Activated B cell treated with CpG ODN at 0.5 μM for 24 hours (primary cell): ENCODE measurements at regions of chr6 and their contacts with region 1.

Region 1: DNA sequence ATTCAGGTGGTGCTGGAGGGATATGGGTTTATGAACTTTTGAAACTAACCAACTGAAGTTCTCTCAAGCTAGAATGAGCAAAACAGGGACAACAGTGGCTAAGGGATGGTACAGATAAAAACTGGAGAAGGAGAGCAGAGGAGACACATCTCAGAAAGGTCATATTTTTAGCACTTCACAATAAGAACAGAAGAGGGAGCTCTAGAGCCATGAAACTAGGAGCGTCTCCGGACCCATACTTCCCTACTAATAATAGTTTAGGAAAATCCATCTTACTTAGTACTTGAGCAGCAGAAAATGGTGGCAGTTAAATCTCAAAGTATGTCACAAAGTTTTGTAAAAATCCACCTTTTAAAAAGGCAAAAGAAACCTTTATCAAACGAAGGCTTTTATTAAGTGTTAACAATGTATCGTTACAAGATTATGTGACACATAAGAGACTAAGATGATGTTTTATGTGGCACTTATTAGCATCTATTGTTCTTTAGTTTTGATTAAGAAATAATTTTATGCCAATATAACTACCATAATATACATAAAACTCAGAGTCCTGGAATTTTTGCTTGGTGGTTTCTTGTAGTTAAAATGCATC is 278.6 kb downstream of the TBC1D32 start:
- DNase-seq: no peak
- ATAC-seq: peak; percentile 58
- H3K4me3 Mint-ChIP-seq: no peak overlapping the region
- H3K27ac Mint-ChIP-seq: no peak overlapping the region
- H3K4me1 Mint-ChIP-seq: peaks cover 2% of the 10 kb centered on the region
- H3K27me3 Mint-ChIP-seq: no peaks in the 10 kb centered on the region
- CTCF ChIP-seq: no peak

Region 2: GRCh38 chr6:120990866-120991265 is 64.8 kb before region 1 on chr6:
- CTCF ChIA-PET with region 1: no interaction called
- POLR2A ChIA-PET with region 1: no interaction called
- intact Hi-C with region 1: no loop called
- DNase-seq: no peak
- ATAC-seq: no peak
- H3K4me3 Mint-ChIP-seq: no peak overlapping the region
- H3K27ac Mint-ChIP-seq: no peak overlapping the region
- H3K4me1 Mint-ChIP-seq: no peaks in the 10 kb centered on the region
- H3K27me3 Mint-ChIP-seq: peaks cover 2% of the 10 kb centered on the region
- CTCF ChIP-seq: no peak

Region 3: DNA sequence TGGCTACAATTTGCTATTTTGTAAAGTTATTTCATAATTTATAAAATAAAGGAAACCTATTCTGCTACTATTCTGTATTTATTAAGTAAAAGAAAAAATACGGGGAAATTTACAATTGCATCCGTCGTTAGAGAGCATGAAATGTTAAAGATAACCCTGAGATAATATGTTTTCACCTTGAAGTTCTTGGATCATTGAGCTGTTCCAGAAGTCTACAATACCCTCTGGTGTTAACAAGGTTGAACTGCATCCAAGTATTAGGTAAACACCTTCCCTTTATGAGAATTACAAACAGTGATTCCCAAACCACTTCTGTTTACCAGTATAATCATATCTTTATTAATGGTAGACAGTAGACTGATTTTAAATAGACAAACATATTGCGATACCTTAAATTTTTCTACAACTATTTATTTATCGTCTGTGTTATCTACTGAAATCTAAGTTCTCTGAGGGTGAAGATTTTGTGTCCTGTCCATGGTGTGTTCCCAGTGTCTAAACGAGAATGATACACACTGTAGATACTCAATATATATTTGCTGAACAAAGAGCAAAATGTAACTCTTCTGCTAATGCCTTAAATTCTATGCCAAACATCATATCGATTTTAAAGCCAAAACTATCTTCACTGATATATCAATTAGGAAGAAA is 250.4 kb after region 1 on chr6:
- CTCF ChIA-PET with region 1: interaction called, 34 read pairs
- POLR2A ChIA-PET with region 1: no interaction called
- intact Hi-C with region 1: loop called (anchors 1 kb)
- DNase-seq: no peak
- ATAC-seq: no peak
- H3K4me3 Mint-ChIP-seq: no peak overlapping the region
- H3K27ac Mint-ChIP-seq: no peak overlapping the region
- H3K4me1 Mint-ChIP-seq: no peaks in the 10 kb centered on the region
- H3K27me3 Mint-ChIP-seq: no peaks in the 10 kb centered on the region
- CTCF ChIP-seq: no peak

Region 4: GRCh38 chr6:121365536-121366521 is 310.2 kb after region 1 on chr6:
- CTCF ChIA-PET with region 1: no interaction called
- POLR2A ChIA-PET with region 1: no interaction called
- intact Hi-C with region 1: no loop called
- DNase-seq: no peak
- ATAC-seq: no peak
- H3K4me3 Mint-ChIP-seq: no peak overlapping the region
- H3K27ac Mint-ChIP-seq: no peak overlapping the region
- H3K4me1 Mint-ChIP-seq: no peaks in the 10 kb centered on the region
- H3K27me3 Mint-ChIP-seq: peaks cover 18% of the 10 kb centered on the region
- CTCF ChIP-seq: no peak

Region 5: GRCh38 chr6:121399966-121400365 is 344.3 kb after region 1 on chr6:
- CTCF ChIA-PET with region 1: no interaction called
- POLR2A ChIA-PET with region 1: no interaction called
- intact Hi-C with region 1: loop called (anchors 5 kb)
- DNase-seq: no peak
- ATAC-seq: no peak
- H3K4me3 Mint-ChIP-seq: no peak overlapping the region
- H3K27ac Mint-ChIP-seq: no peak overlapping the region
- H3K4me1 Mint-ChIP-seq: no peaks in the 10 kb centered on the region
- H3K27me3 Mint-ChIP-seq: no peaks in the 10 kb centered on the region
- CTCF ChIP-seq: no peak